ENCODE measurements at regions of chr17 and their contacts with region 1.

Region 1: DNA sequence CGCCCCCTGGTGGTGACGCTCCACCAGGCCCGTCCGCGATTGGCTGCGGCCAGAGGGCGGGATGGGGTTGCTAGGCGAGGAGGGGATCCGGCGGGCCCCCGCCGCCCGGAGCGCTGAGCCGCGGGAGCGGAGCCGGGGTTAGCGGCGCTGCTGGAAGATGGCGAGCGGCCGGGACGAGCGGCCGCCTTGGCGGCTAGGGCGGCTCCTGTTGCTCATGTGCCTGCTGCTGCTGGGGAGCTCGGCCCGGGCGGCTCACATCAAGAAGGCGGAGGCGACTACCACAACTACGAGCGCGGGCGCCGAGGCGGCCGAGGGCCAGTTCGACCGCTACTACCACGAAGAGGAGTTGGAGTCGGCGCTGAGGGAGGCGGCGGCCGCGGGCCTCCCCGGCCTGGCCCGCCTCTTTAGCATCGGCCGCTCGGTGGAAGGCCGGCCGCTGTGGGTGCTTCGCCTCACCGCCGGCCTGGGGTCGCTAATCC is at the start of gene CPD:
- DNase-seq: peak; percentile 93 to 99 (median 97)
- ATAC-seq: peak; percentile 94
- H3K4me3 ChIP-seq: peak within 1 kb of the TSS; percentile 78
- H3K4me3 Mint-ChIP-seq: peak within 1 kb of the TSS; percentile 93
- H3K27ac ChIP-seq: peak within 1 kb of the TSS; percentile 82 to 88
- H3K27ac Mint-ChIP-seq: peak within 1 kb of the TSS; percentile 93
- H3K4me1 ChIP-seq: peaks cover 38% of the 10 kb centered on the region
- H3K4me1 Mint-ChIP-seq: peaks cover 65% of the 10 kb centered on the region
- H3K27me3 ChIP-seq: no peaks in the 10 kb centered on the region
- H3K27me3 Mint-ChIP-seq: no peaks in the 10 kb centered on the region
- CTCF ChIP-seq: no peak
- total RNA-seq, gene CPD: 26.2 to 30.7 TPM

Region 2: GRCh38 chr17:30116661-30117551 is 262.0 kb before region 1 on chr17 and contains the start of gene NSRP1:
- CTCF ChIA-PET with region 1: no interaction called
- POLR2A ChIA-PET with region 1: no interaction called
- intact Hi-C with region 1: loop called in 1 of 2 experiments (anchors 5 kb)
- DNase-seq: peak; percentile 85 to 96 (median 90)
- ATAC-seq: peak; percentile 97
- H3K4me3 ChIP-seq: peak within 1 kb of the TSS; percentile 97
- H3K4me3 Mint-ChIP-seq: peak within 1 kb of the TSS; percentile 97
- H3K27ac ChIP-seq: peak within 1 kb of the TSS; percentile 85 to 99
- H3K27ac Mint-ChIP-seq: peak within 1 kb of the TSS; percentile 95
- H3K4me1 ChIP-seq: peaks cover 21% of the 10 kb centered on the region
- H3K4me1 Mint-ChIP-seq: peaks cover 45% of the 10 kb centered on the region
- H3K27me3 ChIP-seq: no peaks in the 10 kb centered on the region
- H3K27me3 Mint-ChIP-seq: no peaks in the 10 kb centered on the region
- CTCF ChIP-seq: no peak
- total RNA-seq, gene NSRP1: 23.8 to 25.2 TPM

Region 3: DNA sequence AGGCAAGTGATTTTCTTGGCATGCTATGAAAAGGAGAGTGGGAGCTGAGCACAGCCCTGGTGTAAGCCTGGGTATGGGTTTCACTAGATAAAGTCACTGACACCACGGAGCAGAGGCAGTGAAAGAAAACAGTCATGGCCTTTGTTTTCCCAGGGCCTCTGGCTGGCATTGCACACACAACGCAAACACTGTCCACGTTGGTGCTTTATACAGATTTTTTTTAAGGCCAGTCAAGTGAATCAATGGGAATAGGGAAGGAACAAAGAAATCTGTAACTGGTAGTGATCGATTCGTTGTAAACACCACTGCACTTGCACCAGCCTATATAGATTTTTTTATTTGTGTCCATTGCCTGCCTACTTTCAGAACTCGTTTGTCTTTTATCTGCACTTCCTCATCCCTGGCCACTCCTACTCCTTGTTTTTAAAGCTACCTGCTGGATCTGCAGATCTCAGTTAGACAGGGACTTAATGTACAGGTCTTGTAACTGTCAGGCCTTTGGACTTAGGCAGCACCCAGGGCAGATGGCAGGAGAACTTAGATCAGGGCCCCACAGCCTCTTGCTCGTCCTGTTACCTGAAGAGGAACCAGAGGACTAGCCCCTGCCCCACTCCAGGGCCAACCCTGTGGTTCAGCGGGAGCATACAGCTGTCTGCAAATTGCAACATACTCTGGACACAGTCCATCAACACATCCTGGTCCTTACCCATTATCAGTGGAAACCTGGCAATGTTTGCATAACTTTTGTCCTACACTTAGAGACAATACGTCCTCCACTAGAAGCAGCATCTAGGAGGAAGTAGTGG is 34.4 kb before region 1 on chr17:
- CTCF ChIA-PET with region 1: interaction called, 4 read pairs
- POLR2A ChIA-PET with region 1: interaction called, 4 read pairs
- intact Hi-C with region 1: loop called (anchors 2 to 5 kb)
- DNase-seq: no peak
- ATAC-seq: no peak
- H3K4me3 ChIP-seq: no peak overlapping the region
- H3K4me3 Mint-ChIP-seq: no peak overlapping the region
- H3K27ac ChIP-seq: no peak overlapping the region
- H3K27ac Mint-ChIP-seq: no peak overlapping the region
- H3K4me1 ChIP-seq: peaks cover 7% of the 10 kb centered on the region
- H3K4me1 Mint-ChIP-seq: peaks cover 7% of the 10 kb centered on the region
- H3K27me3 ChIP-seq: no peaks in the 10 kb centered on the region
- H3K27me3 Mint-ChIP-seq: no peaks in the 10 kb centered on the region
- CTCF ChIP-seq: no peak

Region 4: DNA sequence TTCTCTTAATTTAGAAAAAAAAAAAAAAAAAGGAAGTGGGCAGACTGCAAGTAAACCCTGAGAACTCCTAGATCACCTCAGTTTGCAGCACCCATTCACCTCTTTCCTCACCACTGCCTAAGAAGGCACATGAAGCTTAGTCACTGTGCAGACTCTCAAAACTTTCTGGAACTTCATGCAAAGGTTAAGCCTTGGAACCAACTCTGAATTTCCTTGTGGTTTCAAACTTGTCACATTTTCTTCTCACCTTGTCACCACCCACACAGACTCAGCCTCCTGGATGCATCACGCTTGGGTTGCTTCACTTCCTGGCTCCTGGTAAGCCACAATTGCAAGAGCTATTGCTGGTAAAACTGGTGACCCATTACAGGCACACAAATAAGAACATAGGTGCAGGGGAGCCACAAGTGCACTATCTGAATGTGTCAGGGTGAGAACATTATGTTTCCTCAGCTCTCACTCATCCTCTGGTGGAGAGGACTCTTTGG is 15.1 kb before region 1 on chr17:
- CTCF ChIA-PET with region 1: interaction called, 3 read pairs
- POLR2A ChIA-PET with region 1: interaction called, 15 read pairs
- intact Hi-C with region 1: loop called in 1 of 2 experiments (anchors 2 kb)
- DNase-seq: peak; percentile 32 to 92 (median 62)
- ATAC-seq: peak; percentile 87
- H3K4me3 ChIP-seq: no peak overlapping the region
- H3K4me3 Mint-ChIP-seq: peak overlapping the region; percentile 2
- H3K27ac ChIP-seq: no peak overlapping the region
- H3K27ac Mint-ChIP-seq: peak overlapping the region; percentile 75
- H3K4me1 ChIP-seq: peaks cover 27% of the 10 kb centered on the region
- H3K4me1 Mint-ChIP-seq: peaks cover 30% of the 10 kb centered on the region
- H3K27me3 ChIP-seq: no peaks in the 10 kb centered on the region
- H3K27me3 Mint-ChIP-seq: no peaks in the 10 kb centered on the region
- CTCF ChIP-seq: no peak

Region 5: GRCh38 chr17:30429155-30429554 is 50.3 kb after region 1 on chr17:
- CTCF ChIA-PET with region 1: no interaction called
- POLR2A ChIA-PET with region 1: no interaction called
- intact Hi-C with region 1: no loop called
- DNase-seq: no peak
- ATAC-seq: no peak
- H3K4me3 ChIP-seq: no peak overlapping the region
- H3K4me3 Mint-ChIP-seq: no peak overlapping the region
- H3K27ac ChIP-seq: no peak overlapping the region
- H3K27ac Mint-ChIP-seq: no peak overlapping the region
- H3K4me1 ChIP-seq: no peaks in the 10 kb centered on the region
- H3K4me1 Mint-ChIP-seq: no peaks in the 10 kb centered on the region
- H3K27me3 ChIP-seq: no peaks in the 10 kb centered on the region
- H3K27me3 Mint-ChIP-seq: no peaks in the 10 kb centered on the region
- CTCF ChIP-seq: no peak

Region 6: DNA sequence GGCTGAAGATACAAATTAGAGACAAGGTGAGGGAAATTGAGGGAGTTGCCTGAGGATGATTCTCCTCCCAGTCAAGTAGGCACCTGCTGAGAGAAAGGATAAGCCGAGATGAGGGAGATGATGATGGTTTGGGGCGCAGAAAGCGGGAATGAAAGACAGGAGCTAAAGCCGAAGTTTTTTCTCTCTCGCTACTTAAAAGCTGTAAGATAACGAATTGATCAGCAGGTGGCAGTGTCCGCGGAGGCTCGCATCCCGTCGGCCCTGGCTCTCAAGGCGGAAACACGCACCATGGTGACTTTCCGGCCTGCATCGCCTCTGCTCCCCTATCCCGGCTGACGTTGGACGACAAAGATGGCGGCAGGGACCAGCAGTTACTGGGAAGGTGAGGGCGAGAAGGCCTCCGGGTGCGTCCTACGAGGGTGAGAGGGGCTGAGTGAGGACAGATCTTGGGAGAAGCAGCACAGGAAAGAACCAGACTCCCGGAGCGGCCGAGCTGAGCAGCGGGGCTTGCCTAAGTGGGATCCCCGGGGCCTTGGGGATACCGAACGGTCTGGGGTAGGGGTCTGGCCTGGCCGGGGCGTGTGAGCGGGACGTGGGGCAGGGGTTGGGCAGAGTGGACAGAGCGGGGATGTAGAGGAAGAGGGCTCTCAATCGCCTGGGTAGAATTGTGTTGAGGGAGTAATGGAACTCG is 98.4 kb after region 1 on chr17 and contains the start of gene GOSR1:
- CTCF ChIA-PET with region 1: interaction called, 3 read pairs
- POLR2A ChIA-PET with region 1: no interaction called
- intact Hi-C with region 1: loop called in 1 of 2 experiments (anchors 2 kb)
- DNase-seq: peak; percentile 84 to 97 (median 90)
- ATAC-seq: peak; percentile 97
- H3K4me3 ChIP-seq: peak within 1 kb of the TSS; percentile 56
- H3K4me3 Mint-ChIP-seq: peak within 1 kb of the TSS; percentile 97
- H3K27ac ChIP-seq: peak within 1 kb of the TSS; percentile 71 to 99
- H3K27ac Mint-ChIP-seq: peak within 1 kb of the TSS; percentile 94
- H3K4me1 ChIP-seq: peaks cover 13% of the 10 kb centered on the region
- H3K4me1 Mint-ChIP-seq: peaks cover 48% of the 10 kb centered on the region
- H3K27me3 ChIP-seq: peaks cover 0 to 5% of the 10 kb centered on the region in 2 experiments
- H3K27me3 Mint-ChIP-seq: no peaks in the 10 kb centered on the region
- CTCF ChIP-seq: peak; percentile 73
- total RNA-seq, gene GOSR1: 43.2 to 45.6 TPM

Region 7: DNA sequence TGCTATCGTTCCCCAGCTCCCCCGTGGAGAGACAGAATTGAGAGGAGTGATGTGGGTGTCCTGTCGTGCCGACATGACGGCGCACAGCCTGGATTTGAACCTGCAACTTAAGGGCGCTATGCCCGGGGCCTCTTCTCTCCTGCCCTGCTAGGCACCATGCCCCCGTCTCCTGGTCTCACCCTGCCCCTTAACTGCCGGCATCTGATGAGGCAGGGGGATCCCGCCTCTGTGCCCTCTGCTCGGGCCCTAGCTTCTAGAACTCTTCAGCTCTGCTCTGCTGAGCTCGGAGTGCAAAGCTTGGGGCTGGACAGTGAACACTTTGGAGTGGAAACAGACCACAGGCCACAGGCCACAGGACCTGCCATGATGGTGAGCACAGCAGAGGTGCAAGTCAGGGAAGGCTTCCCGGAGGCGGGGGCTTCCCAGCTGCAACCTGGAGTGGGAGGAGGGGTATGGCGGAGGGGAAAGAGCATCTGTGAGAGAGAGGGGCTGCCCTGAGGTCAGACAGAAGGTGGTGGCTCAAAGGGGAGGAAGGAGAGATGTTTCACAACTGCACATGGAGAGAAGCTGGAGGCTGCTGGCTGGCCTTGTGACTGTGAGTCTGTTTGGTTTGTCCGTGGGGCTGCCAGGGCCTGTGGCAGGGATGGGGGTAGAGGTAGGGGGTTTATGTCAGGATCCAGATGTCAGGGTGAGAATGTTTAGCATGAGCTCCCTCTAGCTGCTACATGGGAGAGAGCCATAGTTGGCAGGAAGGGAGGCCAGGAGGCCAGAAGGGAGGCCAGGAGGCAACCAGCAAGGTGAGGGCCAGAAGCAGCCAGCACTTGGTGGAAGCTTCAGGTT is 337.8 kb after region 1 on chr17:
- CTCF ChIA-PET with region 1: no interaction called
- POLR2A ChIA-PET with region 1: no interaction called
- intact Hi-C with region 1: loop called in 1 of 2 experiments (anchors 10 kb)
- DNase-seq: peak in 1 of 14 experiments; percentile 2
- ATAC-seq: no peak
- H3K4me3 ChIP-seq: no peak overlapping the region
- H3K4me3 Mint-ChIP-seq: no peak overlapping the region
- H3K27ac ChIP-seq: no peak overlapping the region
- H3K27ac Mint-ChIP-seq: no peak overlapping the region
- H3K4me1 ChIP-seq: peaks cover 11% of the 10 kb centered on the region
- H3K4me1 Mint-ChIP-seq: peaks cover 12% of the 10 kb centered on the region
- H3K27me3 ChIP-seq: no peaks in the 10 kb centered on the region
- H3K27me3 Mint-ChIP-seq: no peaks in the 10 kb centered on the region
- CTCF ChIP-seq: no peak

Measured in CD4-positive, alpha-beta T cell (primary cell).